GM10248 (cell line): ENCODE measurements at regions of chr2 and their contacts with region 1.

Region 1: DNA sequence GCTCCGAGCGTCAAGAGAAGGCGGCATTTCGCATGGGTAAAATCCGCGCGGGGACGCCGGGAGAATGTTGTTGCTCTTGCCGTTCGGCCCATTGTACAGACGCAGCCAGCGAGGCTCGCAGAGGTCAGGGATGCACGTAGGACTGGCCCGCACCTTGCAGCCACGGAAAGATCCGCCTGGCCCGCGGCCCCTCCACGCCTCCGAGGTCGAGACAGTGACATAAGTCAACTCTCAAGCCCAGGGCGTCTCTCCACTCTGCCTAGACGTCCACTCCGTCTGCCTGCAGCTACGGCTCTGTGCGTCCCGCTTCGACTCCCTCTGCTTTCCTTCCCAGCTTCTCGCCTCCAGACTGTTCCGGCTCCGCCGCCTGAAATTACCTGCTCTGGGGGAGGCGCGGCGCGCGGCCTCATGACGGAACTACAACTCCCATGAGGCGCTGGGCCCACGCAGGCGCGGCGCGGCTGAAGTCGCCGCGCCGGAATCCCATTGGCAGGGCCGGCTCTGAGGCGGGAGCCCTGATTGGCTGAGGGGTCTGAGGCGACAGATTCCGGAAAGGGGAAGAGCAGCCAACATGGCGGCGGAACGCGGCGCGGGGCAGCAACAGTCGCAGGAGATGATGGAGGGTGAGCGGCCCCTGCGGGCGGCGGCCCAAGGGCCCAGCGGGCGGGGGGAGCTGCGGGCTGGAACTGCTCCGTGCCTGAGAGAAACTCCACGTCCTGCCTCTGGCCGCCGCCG is at the start of gene PPP1R7:
- DNase-seq: peak; percentile 98
- CTCF ChIP-seq: peak; percentile 59

Region 2: DNA sequence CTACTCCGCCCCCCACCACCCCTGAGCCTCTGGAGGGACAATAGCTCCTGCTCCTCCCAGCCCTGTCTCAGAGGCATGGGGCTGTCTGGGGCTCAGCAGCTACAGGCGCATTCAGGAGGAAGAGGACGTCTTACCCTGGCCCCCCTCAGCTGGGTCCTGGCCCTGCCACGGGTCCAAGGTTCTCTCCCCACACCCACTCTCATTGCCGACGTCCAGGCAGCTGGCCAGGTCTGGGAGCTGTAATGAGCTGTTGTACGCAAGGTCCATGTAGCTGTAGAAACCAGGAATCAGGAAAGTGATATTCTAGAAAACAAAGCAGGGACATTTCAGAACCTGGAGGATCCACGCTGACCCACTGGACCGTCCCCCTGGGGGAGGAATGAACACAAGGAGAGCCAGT is 14.4 kb before region 1 on chr2:
- CTCF ChIA-PET with region 1: interaction called, 17 read pairs
- POLR2A ChIA-PET with region 1: interaction called, 4 read pairs
- DNase-seq: no peak
- CTCF ChIP-seq: no peak

Region 3: DNA sequence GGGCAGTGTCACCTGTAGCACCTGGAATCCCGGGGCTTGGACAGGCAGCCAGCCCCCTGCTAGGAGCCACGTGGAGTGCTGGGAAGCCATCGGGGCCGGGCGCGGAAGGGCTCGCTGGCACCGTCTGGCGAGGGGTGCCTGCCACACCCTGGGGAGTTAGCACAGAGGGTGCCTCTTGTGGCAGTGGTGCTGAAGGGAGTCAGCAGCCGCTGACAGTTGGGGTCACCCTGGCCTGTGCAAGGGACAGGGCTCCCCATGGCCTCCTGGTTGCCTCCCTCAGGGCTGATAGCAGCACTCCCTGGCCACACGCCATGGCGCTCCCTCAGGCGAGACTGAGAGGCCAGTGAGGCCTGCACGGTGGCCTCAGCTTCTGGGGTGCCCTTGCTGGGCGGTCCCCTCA is 570.5 kb after region 1 on chr2:
- CTCF ChIA-PET with region 1: no interaction called
- POLR2A ChIA-PET with region 1: no interaction called
- DNase-seq: no peak
- CTCF ChIP-seq: no peak